Activated naive CD8-positive, alpha-beta T cell treated with anti-CD3 and anti-CD28 coated beads, Interleukin-2, amount 10 ng/mL, durations not matched to agents 7 days and 5 days (primary cell): ENCODE measurements at regions of chr9 and their contacts with region 1.

Region 1: DNA sequence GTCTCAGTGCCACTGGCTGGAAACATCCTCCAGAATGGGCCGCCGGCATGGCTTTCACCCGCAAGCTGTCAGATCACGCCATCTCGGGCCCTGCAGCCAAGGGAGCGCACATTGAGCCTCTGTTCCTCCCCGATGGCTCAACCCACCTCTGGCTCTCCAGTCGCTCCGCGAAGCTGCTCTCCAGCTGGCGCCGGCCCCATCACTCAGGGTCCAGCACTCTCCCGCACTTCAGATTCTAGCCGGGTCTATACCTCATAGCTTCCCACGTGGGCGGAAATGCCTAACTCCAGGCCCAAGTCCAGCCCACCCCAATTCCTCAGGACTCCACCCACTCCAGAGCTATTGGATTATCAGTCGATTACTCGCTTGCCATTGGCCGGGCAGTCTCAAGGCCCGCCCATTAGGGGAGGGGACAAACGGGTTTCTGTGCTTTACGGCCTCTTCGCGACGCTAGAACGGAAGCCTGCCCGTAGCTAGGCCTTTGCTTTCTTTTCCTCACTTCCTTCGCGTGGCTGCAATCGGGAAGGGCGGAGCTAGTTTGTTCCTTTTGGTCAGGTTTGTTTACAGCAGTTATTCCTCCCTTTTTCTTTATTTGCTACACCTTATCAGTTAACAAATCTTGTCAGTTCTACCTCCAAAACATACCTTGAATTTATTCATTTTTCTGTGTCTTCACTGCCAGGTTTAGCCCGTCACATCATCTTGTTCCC is at the start of gene NOL6:
- DNase-seq: peak; percentile 94
- ATAC-seq: peak; percentile 99
- H3K4me3 Mint-ChIP-seq: peak within 1 kb of the TSS; percentile 96
- H3K27ac Mint-ChIP-seq: peak within 1 kb of the TSS; percentile 93
- H3K4me1 Mint-ChIP-seq: peaks cover 19% of the 10 kb centered on the region
- H3K27me3 Mint-ChIP-seq: no peaks in the 10 kb centered on the region
- total RNA-seq, gene NOL6: 30.1 to 33.2 TPM

Region 2: GRCh38 chr9:33290247-33291030 is 183.4 kb before region 1 on chr9 and contains the start of gene NFX1:
- POLR2A ChIA-PET with region 1: interaction called, 15 read pairs
- DNase-seq: peak; percentile 97
- ATAC-seq: peak; percentile 89
- H3K4me3 Mint-ChIP-seq: peak within 1 kb of the TSS; percentile 93
- H3K27ac Mint-ChIP-seq: peak within 1 kb of the TSS; percentile 98
- H3K4me1 Mint-ChIP-seq: peaks cover 45% of the 10 kb centered on the region
- H3K27me3 Mint-ChIP-seq: no peaks in the 10 kb centered on the region
- total RNA-seq, gene NFX1: 47.4 to 48.2 TPM

Region 3: GRCh38 chr9:33311953-33312352 is 161.8 kb before region 1 on chr9:
- POLR2A ChIA-PET with region 1: no interaction called
- DNase-seq: no peak
- ATAC-seq: no peak
- H3K4me3 Mint-ChIP-seq: no peak overlapping the region
- H3K27ac Mint-ChIP-seq: no peak overlapping the region
- H3K4me1 Mint-ChIP-seq: peaks cover 4% of the 10 kb centered on the region
- H3K27me3 Mint-ChIP-seq: no peaks in the 10 kb centered on the region

Region 4: GRCh38 chr9:33458444-33458843 is 15.4 kb before region 1 on chr9:
- POLR2A ChIA-PET with region 1: interaction called, 10 read pairs
- DNase-seq: no peak
- ATAC-seq: peak; percentile 68
- H3K4me3 Mint-ChIP-seq: peak overlapping the region; percentile 54
- H3K27ac Mint-ChIP-seq: peak overlapping the region; percentile 84
- H3K4me1 Mint-ChIP-seq: peaks cover 43% of the 10 kb centered on the region
- H3K27me3 Mint-ChIP-seq: no peaks in the 10 kb centered on the region

Region 5: DNA sequence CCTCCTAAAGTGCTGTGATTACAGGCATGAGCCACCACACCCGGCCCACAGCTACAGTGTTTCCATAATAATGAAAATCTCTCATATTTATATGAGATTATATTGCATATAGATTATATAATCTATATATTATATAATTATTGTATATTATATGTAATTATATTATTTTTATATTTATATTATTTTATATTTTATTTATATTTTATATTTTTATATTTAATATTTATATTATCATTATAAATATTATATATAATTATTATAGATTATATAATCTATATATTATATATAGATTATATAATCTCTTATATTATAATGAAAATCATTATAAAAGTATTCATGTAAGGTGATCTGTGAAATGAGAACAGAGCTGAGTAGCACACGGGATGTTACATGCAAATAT is 61.7 kb after region 1 on chr9:
- POLR2A ChIA-PET with region 1: no interaction called
- DNase-seq: no peak
- ATAC-seq: no peak
- H3K4me3 Mint-ChIP-seq: no peak overlapping the region
- H3K27ac Mint-ChIP-seq: no peak overlapping the region
- H3K4me1 Mint-ChIP-seq: no peaks in the 10 kb centered on the region
- H3K27me3 Mint-ChIP-seq: peaks cover 20% of the 10 kb centered on the region